Heart right ventricle (tissue), 16 donors: ENCODE measurements at regions of chr16 and their contacts with region 1.

Region 1: GRCh38 chr16:31487720-31488467 is 5.0 kb downstream of the SLC5A2 start:
- DNase-seq: peak in 1 of 2 donors; percentile 47
- ATAC-seq: peak; percentile 56 to 73 (median 66)
- H3K4me3 ChIP-seq: peak overlapping the region; percentile 39 to 74 (median 62)
- H3K27ac ChIP-seq: no peak overlapping the region
- H3K4me1 ChIP-seq: peaks cover 9 to 21% (median 19%) of the 10 kb centered on the region in 9 donors
- H3K27me3 ChIP-seq: peaks cover 0 to 30% (median 18%) of the 10 kb centered on the region in 7 donors
- CTCF ChIP-seq: no peak

Region 2: GRCh38 chr16:31519759-31520431 is 32.0 kb after region 1 on chr16:
- intact Hi-C with region 1: no loop called
- DNase-seq: no peak
- ATAC-seq: no peak
- H3K4me3 ChIP-seq: no peak overlapping the region
- H3K27ac ChIP-seq: no peak overlapping the region
- H3K4me1 ChIP-seq: no peaks in the 10 kb centered on the region
- H3K27me3 ChIP-seq: peaks cover 0 to 10% (median 0%) of the 10 kb centered on the region in 7 donors
- CTCF ChIP-seq: no peak

Region 3: GRCh38 chr16:31700526-31701388 is 212.9 kb after region 1 on chr16:
- intact Hi-C with region 1: loop called in 1 of 10 experiments (anchors 10 kb)
- DNase-seq: peak; percentile 79 to 81
- ATAC-seq: peak; percentile 34 to 98 (median 94)
- H3K4me3 ChIP-seq: peak overlapping the region; percentile 56 to 98 (median 81)
- H3K27ac ChIP-seq: peak overlapping the region in 8 of 10 donors; percentile 25 to 84 (median 50)
- H3K4me1 ChIP-seq: peaks cover 0 to 21% (median 11%) of the 10 kb centered on the region in 9 donors
- H3K27me3 ChIP-seq: peaks cover 0 to 17% (median 0%) of the 10 kb centered on the region in 7 donors
- CTCF ChIP-seq: peak in 6 of 9 donors; percentile 17 to 44 (median 27)

Region 4: GRCh38 chr16:31754998-31755615 is 267.2 kb after region 1 on chr16:
- intact Hi-C with region 1: no loop called
- DNase-seq: no peak
- ATAC-seq: no peak
- H3K4me3 ChIP-seq: no peak overlapping the region
- H3K27ac ChIP-seq: no peak overlapping the region
- H3K4me1 ChIP-seq: no peaks in the 10 kb centered on the region
- H3K27me3 ChIP-seq: no peaks in the 10 kb centered on the region
- CTCF ChIP-seq: no peak

Region 5: GRCh38 chr16:31868691-31869167 is 380.8 kb after region 1 on chr16:
- intact Hi-C with region 1: loop called in 1 of 10 experiments (anchors 10 kb)
- DNase-seq: peak; percentile 63 to 82
- ATAC-seq: peak; percentile 38 to 78 (median 66)
- H3K4me3 ChIP-seq: peak overlapping the region in 2 of 10 donors; percentile 20 to 22
- H3K27ac ChIP-seq: peak overlapping the region in 4 of 10 donors; percentile 0 to 93 (median 36)
- H3K4me1 ChIP-seq: peaks cover 0 to 36% (median 8%) of the 10 kb centered on the region in 9 donors
- H3K27me3 ChIP-seq: peaks cover 0 to 4% (median 0%) of the 10 kb centered on the region in 7 donors
- CTCF ChIP-seq: peak; percentile 74 to 91 (median 83)